ENCODE measurements at regions of chr15 and their contacts with region 1.

Region 1: GRCh38 chr15:25416693-25417092 is 22.1 kb downstream of the UBE3A start:
- DNase-seq: peak; percentile 71
- ATAC-seq: peak; percentile 88
- H3K4me3 ChIP-seq: peak overlapping the region; percentile 20; the same call in 1 of the 2 replicates
- H3K27ac ChIP-seq: peak overlapping the region; percentile 80
- H3K4me1 ChIP-seq: peaks cover 7% of the 10 kb centered on the region; the same call in 1 of the 2 replicates
- H3K27me3 ChIP-seq: no peaks in the 10 kb centered on the region
- CTCF ChIP-seq: no peak
- EP300 ChIP-seq: peak; percentile 47 to 51; a peak in 1 of 4 replicates
- POLR2A ChIP-seq: no peak
- RAD21 ChIP-seq: no peak

Region 2: DNA sequence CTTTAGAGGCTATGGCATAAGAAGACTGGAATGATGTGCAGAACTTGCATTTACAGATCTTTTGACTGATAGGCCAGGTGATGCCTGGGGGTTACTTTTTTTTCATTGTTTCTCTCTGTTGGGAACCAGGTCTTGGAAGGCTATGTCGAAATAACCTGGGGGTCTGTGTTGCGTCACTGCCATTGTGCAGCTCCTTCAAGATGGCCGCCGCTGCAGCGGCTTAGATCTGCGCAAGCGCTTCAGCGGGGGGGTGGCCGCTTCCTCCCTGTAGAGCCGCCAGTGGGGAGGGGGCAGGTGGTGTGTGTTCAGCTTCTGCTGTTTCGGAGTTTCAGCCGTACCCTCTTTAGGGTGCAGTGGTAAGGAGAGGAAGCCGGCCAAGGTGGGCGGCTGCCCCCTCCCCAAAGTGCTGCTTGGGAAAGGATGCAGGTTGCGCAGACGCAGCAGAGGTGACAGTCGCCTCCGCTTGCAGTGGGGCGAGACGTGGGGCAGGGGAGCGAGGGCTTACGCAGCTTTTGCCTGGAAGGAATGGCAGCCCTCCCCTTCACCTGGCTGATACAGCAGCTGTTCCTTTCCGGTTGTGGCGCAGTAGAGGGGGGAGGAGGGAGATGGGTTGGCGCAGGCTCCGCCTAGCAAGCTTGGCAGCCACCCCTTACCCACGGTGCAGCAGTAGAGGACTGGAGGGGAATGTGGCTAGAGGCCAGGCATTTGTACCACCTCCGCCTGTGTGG is 460.4 kb before region 1 on chr15:
- CTCF ChIA-PET with region 1: no interaction called
- POLR2A ChIA-PET with region 1: interaction called, 10 read pairs
- RAD21 ChIA-PET with region 1: no interaction called
- SMC1A ChIA-PET with region 1: no interaction called
- in situ Hi-C with region 1: no loop called
- intact Hi-C with region 1: no loop called
- DNase-seq: peak; percentile 57
- ATAC-seq: peak; percentile 84
- H3K4me3 ChIP-seq: peak overlapping the region; percentile 76
- H3K27ac ChIP-seq: peak overlapping the region; percentile 72
- H3K4me1 ChIP-seq: no peaks in the 10 kb centered on the region
- H3K27me3 ChIP-seq: no peaks in the 10 kb centered on the region
- CTCF ChIP-seq: no peak
- EP300 ChIP-seq: no peak
- POLR2A ChIP-seq: peak; percentile 78
- RAD21 ChIP-seq: no peak

Region 3: GRCh38 chr15:25362545-25362944 is 54.1 kb before region 1 on chr15:
- CTCF ChIA-PET with region 1: no interaction called
- POLR2A ChIA-PET with region 1: interaction called, 4 read pairs
- RAD21 ChIA-PET with region 1: interaction called, 9 read pairs
- SMC1A ChIA-PET with region 1: interaction called, 5 read pairs
- in situ Hi-C with region 1: no loop called
- intact Hi-C with region 1: loop called (anchors 5 kb)
- DNase-seq: no peak
- ATAC-seq: no peak
- H3K4me3 ChIP-seq: no peak overlapping the region
- H3K27ac ChIP-seq: no peak overlapping the region
- H3K4me1 ChIP-seq: no peaks in the 10 kb centered on the region
- H3K27me3 ChIP-seq: no peaks in the 10 kb centered on the region
- CTCF ChIP-seq: no peak
- EP300 ChIP-seq: no peak
- POLR2A ChIP-seq: no peak
- RAD21 ChIP-seq: no peak

Region 4: GRCh38 chr15:25378501-25378901 is 38.2 kb before region 1 on chr15:
- CTCF ChIA-PET with region 1: no interaction called
- POLR2A ChIA-PET with region 1: no interaction called
- RAD21 ChIA-PET with region 1: no interaction called
- SMC1A ChIA-PET with region 1: interaction called, 3 read pairs
- in situ Hi-C with region 1: no loop called
- intact Hi-C with region 1: loop called (anchors 5 kb)
- DNase-seq: no peak
- ATAC-seq: peak; percentile 62
- H3K4me3 ChIP-seq: no peak overlapping the region
- H3K27ac ChIP-seq: no peak overlapping the region
- H3K4me1 ChIP-seq: no peaks in the 10 kb centered on the region
- H3K27me3 ChIP-seq: no peaks in the 10 kb centered on the region
- CTCF ChIP-seq: no peak
- EP300 ChIP-seq: no peak
- POLR2A ChIP-seq: no peak
- RAD21 ChIP-seq: no peak

Region 5: GRCh38 chr15:25426896-25427610 is 10.4 kb after region 1 on chr15:
- CTCF ChIA-PET with region 1: interaction called, 13 read pairs
- POLR2A ChIA-PET with region 1: interaction called, 7 read pairs
- RAD21 ChIA-PET with region 1: interaction called, 17 read pairs
- SMC1A ChIA-PET with region 1: interaction called, 23 read pairs
- in situ Hi-C with region 1: no loop called
- intact Hi-C with region 1: no loop called
- DNase-seq: no peak
- ATAC-seq: peak; percentile 60
- H3K4me3 ChIP-seq: no peak overlapping the region
- H3K27ac ChIP-seq: no peak overlapping the region
- H3K4me1 ChIP-seq: no peaks in the 10 kb centered on the region
- H3K27me3 ChIP-seq: no peaks in the 10 kb centered on the region
- CTCF ChIP-seq: no peak
- EP300 ChIP-seq: no peak
- POLR2A ChIP-seq: no peak
- RAD21 ChIP-seq: no peak

Region 6: DNA sequence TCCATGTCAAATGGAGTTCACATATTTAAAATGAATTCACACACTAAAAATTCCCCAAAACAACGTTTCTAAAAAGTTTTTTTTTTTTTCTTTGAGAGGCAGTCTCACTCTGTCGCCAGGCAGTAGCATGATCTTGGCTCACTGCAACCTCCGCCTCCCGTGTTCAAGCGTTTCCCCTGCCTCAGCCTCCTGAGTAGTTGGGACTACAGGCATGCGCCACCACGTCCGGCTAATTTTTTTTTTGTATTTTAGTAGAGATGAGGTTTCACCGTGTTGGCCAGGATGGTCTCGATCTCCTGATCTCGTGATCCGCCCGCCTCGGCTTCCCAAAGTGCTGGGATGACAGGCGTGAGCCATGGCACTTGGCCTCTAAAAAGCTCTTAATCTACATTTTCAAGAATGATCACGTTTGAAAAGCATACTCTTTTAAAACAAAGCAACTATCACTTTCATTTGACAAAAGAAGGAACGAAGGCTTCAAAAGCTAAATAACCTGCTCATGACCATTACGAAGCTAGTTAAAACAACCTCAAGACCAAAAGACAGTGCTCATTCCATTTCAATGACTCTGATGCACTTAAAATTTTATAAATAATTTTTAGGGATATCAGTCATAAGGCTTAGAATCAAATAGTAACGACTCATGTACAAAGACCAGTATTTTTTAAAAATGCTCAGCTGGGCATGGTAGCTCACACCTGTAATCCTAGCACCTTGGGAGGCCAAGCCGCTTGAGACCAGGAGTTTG is 16.6 kb after region 1 on chr15:
- CTCF ChIA-PET with region 1: interaction called, 6 read pairs
- POLR2A ChIA-PET with region 1: interaction called, 7 read pairs
- RAD21 ChIA-PET with region 1: interaction called, 52 read pairs
- SMC1A ChIA-PET with region 1: interaction called, 39 read pairs
- in situ Hi-C with region 1: no loop called
- intact Hi-C with region 1: no loop called
- DNase-seq: no peak
- ATAC-seq: no peak
- H3K4me3 ChIP-seq: peak overlapping the region; percentile 47; the same call in 1 of the 2 replicates
- H3K27ac ChIP-seq: no peak overlapping the region
- H3K4me1 ChIP-seq: no peaks in the 10 kb centered on the region
- H3K27me3 ChIP-seq: no peaks in the 10 kb centered on the region
- CTCF ChIP-seq: no peak
- EP300 ChIP-seq: no peak
- POLR2A ChIP-seq: no peak
- RAD21 ChIP-seq: no peak